Naive thymus-derived CD4-positive, alpha-beta T cell (primary cell): ENCODE measurements at regions of chr16 and their contacts with region 1.

Region 1: GRCh38 chr16:67040906-67041305 is 12.0 kb downstream of the CBFB start:
- DNase-seq: no peak
- ATAC-seq: no peak
- H3K4me3 ChIP-seq: no peak overlapping the region
- H3K4me3 Mint-ChIP-seq: no peak overlapping the region
- H3K27ac ChIP-seq: no peak overlapping the region
- H3K27ac Mint-ChIP-seq: peak overlapping the region in 4 of 9 donors; percentile 8 to 36 (median 16)
- H3K4me1 ChIP-seq: no peaks in the 10 kb centered on the region
- H3K4me1 Mint-ChIP-seq: peaks cover 14 to 46% (median 21%) of the 10 kb centered on the region in 7 donors
- H3K27me3 ChIP-seq: no peaks in the 10 kb centered on the region
- H3K27me3 Mint-ChIP-seq: no peaks in the 10 kb centered on the region

Region 2: GRCh38 chr16:67053767-67054334 is 12.9 kb after region 1 on chr16:
- CTCF ChIA-PET with region 1: no interaction called
- POLR2A ChIA-PET with region 1: interaction called, 3 read pairs
- intact Hi-C with region 1: loop called in 1 of 2 experiments (anchors 1 kb)
- DNase-seq: peak in 6 of 9 donors; percentile 10 to 46 (median 23)
- ATAC-seq: peak; percentile 46
- H3K4me3 ChIP-seq: peak overlapping the region; percentile 47
- H3K4me3 Mint-ChIP-seq: peak overlapping the region; percentile 34 to 91 (median 76)
- H3K27ac ChIP-seq: peak overlapping the region; percentile 45
- H3K27ac Mint-ChIP-seq: peak overlapping the region; percentile 63 to 93 (median 89)
- H3K4me1 ChIP-seq: peaks cover 19 to 20% of the 10 kb centered on the region in 2 donors
- H3K4me1 Mint-ChIP-seq: peaks cover 36 to 60% (median 44%) of the 10 kb centered on the region in 7 donors
- H3K27me3 ChIP-seq: no peaks in the 10 kb centered on the region
- H3K27me3 Mint-ChIP-seq: no peaks in the 10 kb centered on the region